Gastrocnemius medialis (tissue), 4 donors: ENCODE measurements at regions of chr6 and their contacts with region 1.

Region 1: DNA sequence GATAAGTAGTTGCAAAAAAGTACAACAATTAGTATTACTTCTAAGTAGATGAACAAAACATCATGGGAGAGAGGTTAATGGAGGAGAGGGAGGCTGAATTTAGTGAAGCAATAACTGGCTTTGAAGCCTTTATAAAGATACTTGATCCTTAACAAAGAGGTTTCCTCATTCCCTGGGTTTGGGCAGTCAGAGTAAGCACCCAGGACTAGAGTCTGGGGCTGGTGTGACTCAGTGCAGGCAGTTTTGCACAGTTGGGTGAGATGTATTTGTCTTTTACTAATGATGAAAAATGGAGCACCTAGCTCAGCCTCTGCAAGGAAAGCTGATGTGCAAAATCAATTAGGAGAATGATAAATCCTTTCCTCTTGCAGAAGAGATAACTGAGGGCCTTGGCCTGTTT is 11.8 kb upstream of the OPN5 start:
- DNase-seq: no peak
- ATAC-seq: no peak
- H3K4me3 ChIP-seq: no peak overlapping the region
- H3K27ac ChIP-seq: no peak overlapping the region
- H3K4me1 ChIP-seq: no peaks in the 10 kb centered on the region
- H3K27me3 ChIP-seq: no peaks in the 10 kb centered on the region
- CTCF ChIP-seq: no peak
- POLR2A ChIP-seq: no peak

Region 2: GRCh38 chr6:46661483-46661882 is 1108.5 kb before region 1 on chr6:
- in situ Hi-C with region 1: no loop called
- intact Hi-C with region 1: no loop called
- DNase-seq: no peak
- ATAC-seq: no peak
- H3K4me3 ChIP-seq: no peak overlapping the region
- H3K27ac ChIP-seq: no peak overlapping the region
- H3K4me1 ChIP-seq: no peaks in the 10 kb centered on the region
- H3K27me3 ChIP-seq: no peaks in the 10 kb centered on the region
- CTCF ChIP-seq: no peak
- POLR2A ChIP-seq: no peak

Region 3: GRCh38 chr6:47407348-47408281 is 362.4 kb before region 1 on chr6:
- in situ Hi-C with region 1: loop called (anchors 10 to 25 kb)
- intact Hi-C with region 1: no loop called
- DNase-seq: no peak
- ATAC-seq: no peak
- H3K4me3 ChIP-seq: no peak overlapping the region
- H3K27ac ChIP-seq: no peak overlapping the region
- H3K4me1 ChIP-seq: no peaks in the 10 kb centered on the region
- H3K27me3 ChIP-seq: no peaks in the 10 kb centered on the region
- CTCF ChIP-seq: no peak
- POLR2A ChIP-seq: no peak